Motor neuron (in vitro differentiated cells): ENCODE measurements at regions of chr2 and their contacts with region 1.

Region 1: GRCh38 chr2:28594289-28595108 is 98.6 kb downstream of the PLB1 start:
- ATAC-seq: peak; percentile 66 to 95 (median 93)
- H3K4me3 ChIP-seq: peak overlapping the region in 1 of 5 donors; percentile 7
- H3K27ac ChIP-seq: peak overlapping the region in 1 of 2 donors; percentile 22
- H3K4me1 ChIP-seq: peaks cover 4 to 19% of the 10 kb centered on the region in 2 donors

Region 2: GRCh38 chr2:28681158-28681571 is 86.7 kb after region 1 on chr2:
- in situ Hi-C with region 1: loop called in 1 of 9 experiments (anchors 25 kb)
- ATAC-seq: peak in 6 of 8 experiments; percentile 16 to 89 (median 50)
- H3K4me3 ChIP-seq: no peak overlapping the region
- H3K27ac ChIP-seq: no peak overlapping the region
- H3K4me1 ChIP-seq: peaks cover 3 to 16% of the 10 kb centered on the region in 2 donors

Region 3: DNA sequence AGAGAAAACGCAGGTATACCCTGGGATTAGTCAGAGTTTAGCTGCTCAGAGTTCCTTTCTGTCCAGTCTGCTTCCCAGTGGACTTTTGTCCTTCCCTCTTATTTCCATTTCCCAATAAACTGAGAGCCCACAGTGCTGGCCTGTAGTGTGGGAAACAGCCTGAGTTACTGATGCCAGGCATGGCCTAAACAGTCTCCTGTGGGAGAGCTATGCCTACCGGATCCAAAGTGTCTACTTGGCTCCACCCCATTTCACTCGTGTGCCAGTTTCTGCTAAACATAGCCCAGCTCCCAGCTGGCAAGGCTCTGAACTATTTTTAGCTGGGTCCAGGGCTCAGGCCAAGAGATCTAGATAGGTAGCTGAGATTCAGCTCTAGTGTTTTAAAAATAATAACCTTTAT is 141.5 kb after region 1 on chr2:
- in situ Hi-C with region 1: loop called in 1 of 9 experiments (anchors 25 kb)
- ATAC-seq: peak in 2 of 8 experiments; percentile 56 to 76
- H3K4me3 ChIP-seq: no peak overlapping the region
- H3K27ac ChIP-seq: no peak overlapping the region
- H3K4me1 ChIP-seq: no peaks in the 10 kb centered on the region

Region 4: DNA sequence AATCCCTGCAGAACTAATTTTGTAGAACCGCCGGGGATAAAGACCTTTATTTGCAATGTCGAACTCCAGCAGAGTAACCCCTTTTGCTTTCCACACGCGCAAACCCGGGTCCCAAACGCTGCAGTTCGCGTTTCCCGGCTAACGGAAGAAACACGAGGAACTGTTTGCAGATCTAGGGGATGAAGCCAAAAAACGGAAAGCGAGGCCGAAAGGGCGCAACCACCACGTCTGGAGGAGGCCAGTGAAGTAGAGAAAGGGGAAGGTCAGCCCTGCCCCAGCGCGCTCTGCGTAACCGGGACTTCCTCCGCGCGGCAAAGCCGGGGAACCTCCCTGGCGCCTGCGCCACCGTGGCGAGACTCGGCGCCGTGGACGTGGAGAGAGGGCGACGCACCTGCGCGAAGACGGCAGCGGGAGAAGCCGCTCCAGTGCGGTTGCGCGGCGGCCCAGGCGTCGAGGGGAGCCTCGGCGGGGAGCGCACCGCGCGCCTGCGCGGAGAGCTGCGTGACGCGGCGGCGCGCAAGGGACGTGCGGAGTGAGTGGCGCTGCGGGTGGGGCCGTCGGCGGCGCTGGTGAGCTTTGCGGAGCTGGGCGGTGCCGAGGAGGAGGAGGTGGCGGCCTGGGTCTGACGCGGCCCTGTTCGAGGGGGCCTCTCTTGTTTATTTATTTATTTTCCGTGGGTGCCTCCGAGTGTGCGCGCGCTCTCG is 156.9 kb after region 1 on chr2 and contains the start of gene PPP1CB:
- in situ Hi-C with region 1: loop called in 8 of 9 experiments (anchors 10 to 25 kb)
- ATAC-seq: peak; percentile 81 to 94 (median 92)
- H3K4me3 ChIP-seq: peak within 1 kb of the TSS; percentile 86 to 97 (median 96)
- H3K27ac ChIP-seq: peak within 1 kb of the TSS; percentile 99
- H3K4me1 ChIP-seq: peaks cover 13 to 23% of the 10 kb centered on the region in 2 donors
- total RNA-seq, gene PPP1CB: 96.7 to 217 (median 144) TPM